Activated T-helper 1 cell treated with anti-CD3 and anti-CD28 coated beads, Interleukin-12 subunit alpha, Interleukin-12 subunit beta, Interleukin-2, Interleukin-4 antibody, amounts not matched to agents 30 ng/mL and 10 ng/mL and 1 ng/mL, durations not matched to agents 14 hours and 24 hours and 36 hours (primary cell): ENCODE measurements at regions of chr7 and their contacts with region 1.

Region 1: DNA sequence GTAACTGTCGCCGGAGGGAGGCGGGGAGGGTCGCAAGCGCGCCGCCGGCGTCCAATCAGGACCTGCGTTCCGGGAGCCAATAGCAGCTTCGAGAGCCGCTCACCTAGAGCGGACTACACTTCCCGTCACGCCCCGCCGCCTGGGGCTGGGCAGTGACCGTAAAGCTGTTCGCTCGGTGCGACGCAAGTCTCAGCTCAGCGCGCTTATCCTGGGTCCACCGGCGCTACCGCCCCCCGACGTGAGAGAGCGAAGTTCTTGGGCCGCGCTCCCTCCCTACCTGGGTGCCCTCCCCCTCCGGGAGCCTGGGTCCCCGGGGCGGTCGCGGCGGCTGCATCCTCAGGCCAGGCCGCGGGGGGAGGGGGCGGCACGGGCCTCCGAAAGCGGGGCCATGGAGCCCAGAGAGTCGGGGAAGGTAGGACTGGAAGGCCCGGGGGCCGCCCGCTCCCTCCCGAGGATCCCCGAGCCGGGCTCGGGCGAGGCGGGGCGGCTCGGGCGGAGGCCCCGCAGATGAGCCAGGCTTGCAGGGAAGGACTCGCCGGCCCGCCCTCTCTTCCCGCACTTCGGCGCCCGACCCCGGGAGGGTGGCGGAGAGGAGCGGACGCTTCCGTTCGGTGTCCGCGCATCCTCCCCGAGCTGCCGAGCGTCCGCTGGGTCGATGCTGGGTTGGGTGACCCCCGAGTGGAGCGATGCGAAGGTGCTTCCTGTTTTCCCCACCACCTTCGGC is at the start of gene ZNF862:
- DNase-seq: peak; percentile 95
- H3K4me3 Mint-ChIP-seq: peak within 1 kb of the TSS; percentile 89
- H3K27ac Mint-ChIP-seq: peak within 1 kb of the TSS; percentile 75
- H3K4me1 Mint-ChIP-seq: peaks cover 25% of the 10 kb centered on the region
- H3K27me3 Mint-ChIP-seq: peaks cover 9% of the 10 kb centered on the region
- total RNA-seq, gene ZNF862: 14.2 and 19.3 TPM in 2 replicates

Region 2: DNA sequence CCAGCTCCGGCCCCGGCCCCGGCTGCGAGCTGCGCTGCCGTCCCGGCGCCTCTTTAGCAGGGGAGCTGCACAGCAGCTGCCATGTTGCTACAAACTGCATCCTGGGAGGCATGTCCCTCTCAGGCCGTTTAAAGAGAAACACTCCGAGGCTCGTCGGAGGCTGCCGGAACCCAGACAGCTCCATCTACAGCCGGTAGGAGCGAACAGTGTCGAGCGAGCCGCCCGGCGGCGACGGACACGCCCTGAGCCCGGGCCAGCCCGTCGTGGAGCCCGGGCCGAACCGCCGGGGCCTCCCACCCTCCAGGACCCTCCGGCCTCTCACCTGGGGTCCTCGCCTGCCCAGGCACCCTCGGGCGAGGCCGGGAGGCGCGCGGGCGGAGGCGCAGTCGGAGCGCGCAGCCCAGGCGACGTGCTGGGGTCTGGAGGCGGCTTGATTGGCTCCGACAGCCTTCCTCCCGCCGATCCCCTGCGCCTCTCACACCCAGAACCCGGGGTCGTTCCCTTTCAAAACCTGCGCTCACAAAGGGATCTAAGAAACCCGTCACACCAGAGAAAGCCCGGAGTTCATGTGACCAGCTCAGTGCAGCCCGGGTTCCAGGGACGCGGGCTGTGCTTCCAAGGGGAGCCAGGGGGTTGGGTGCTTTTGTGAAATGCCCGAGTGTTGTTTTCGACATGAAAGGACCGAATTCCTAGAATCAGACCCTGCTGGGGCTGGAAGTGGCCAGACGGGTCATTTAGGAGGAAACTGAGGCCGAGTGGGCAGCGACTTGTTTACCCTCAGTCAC is 377.7 kb before region 1 on chr7 and contains the start of gene ZNF777:
- intact Hi-C with region 1: loop called (anchors 2 kb)
- DNase-seq: peak; percentile 80
- H3K4me3 Mint-ChIP-seq: peak within 1 kb of the TSS; percentile 85
- H3K27ac Mint-ChIP-seq: peak within 1 kb of the TSS; percentile 66
- H3K4me1 Mint-ChIP-seq: peaks cover 23% of the 10 kb centered on the region
- H3K27me3 Mint-ChIP-seq: peaks cover 27% of the 10 kb centered on the region
- total RNA-seq, gene ZNF777: 19.0 and 19.3 TPM in 2 replicates

Region 3: DNA sequence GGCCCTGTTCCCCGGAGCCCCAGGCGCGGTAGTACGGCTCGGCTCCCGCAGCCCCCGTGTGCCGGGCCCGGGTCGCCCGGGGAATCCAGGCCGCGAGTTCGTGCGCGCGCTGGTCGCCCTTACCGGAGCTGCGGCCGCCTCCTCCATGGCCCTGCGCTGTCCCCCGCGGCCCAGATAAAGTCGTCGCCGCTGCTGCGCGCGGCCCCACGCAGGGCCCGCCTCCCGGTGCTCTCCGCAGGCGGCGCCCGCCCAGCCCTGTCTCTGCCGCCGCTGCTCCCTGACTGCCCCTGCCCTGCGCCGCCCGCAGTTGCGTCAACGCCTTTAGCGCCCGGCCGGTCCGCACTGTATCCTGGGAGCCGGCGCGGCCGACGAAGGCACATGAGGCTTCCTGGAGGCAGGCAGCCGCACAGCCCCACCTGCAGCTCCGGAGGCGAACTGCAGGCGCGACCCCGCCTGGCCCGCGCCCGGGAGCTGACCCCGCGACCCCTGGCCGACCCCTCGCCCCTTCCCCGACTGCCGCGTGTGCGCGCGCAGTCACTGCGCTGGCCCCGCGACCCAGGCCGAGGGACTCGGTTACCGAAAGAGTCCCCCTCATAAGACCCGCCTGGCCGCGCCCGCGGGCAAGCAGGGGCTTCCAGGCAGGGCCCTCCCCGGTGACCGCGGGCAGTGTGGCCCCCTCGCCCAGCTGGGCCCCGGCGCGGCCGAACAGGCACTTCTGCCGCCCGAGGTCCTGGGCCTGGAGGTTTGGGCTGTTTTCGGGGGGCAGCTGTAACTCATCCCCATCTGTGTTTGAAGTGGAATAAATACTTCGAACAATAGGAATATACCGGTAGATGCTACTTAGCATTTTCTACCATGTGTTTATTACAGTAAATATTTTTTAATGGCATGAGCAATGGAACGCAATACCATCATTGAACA is 213.7 kb before region 1 on chr7:
- intact Hi-C with region 1: loop called (anchors 1 kb)
- DNase-seq: peak; percentile 91
- H3K4me3 Mint-ChIP-seq: peak overlapping the region; percentile 89
- H3K27ac Mint-ChIP-seq: peak overlapping the region; percentile 83
- H3K4me1 Mint-ChIP-seq: peaks cover 32% of the 10 kb centered on the region
- H3K27me3 Mint-ChIP-seq: peaks cover 6% of the 10 kb centered on the region

Region 4: GRCh38 chr7:149771721-149772240 is 66.6 kb before region 1 on chr7:
- intact Hi-C with region 1: loop called (anchors 1 kb)
- DNase-seq: peak; percentile 83
- H3K4me3 Mint-ChIP-seq: peak overlapping the region; percentile 82
- H3K27ac Mint-ChIP-seq: no peak overlapping the region
- H3K4me1 Mint-ChIP-seq: no peaks in the 10 kb centered on the region
- H3K27me3 Mint-ChIP-seq: peaks cover 28% of the 10 kb centered on the region

Region 5: DNA sequence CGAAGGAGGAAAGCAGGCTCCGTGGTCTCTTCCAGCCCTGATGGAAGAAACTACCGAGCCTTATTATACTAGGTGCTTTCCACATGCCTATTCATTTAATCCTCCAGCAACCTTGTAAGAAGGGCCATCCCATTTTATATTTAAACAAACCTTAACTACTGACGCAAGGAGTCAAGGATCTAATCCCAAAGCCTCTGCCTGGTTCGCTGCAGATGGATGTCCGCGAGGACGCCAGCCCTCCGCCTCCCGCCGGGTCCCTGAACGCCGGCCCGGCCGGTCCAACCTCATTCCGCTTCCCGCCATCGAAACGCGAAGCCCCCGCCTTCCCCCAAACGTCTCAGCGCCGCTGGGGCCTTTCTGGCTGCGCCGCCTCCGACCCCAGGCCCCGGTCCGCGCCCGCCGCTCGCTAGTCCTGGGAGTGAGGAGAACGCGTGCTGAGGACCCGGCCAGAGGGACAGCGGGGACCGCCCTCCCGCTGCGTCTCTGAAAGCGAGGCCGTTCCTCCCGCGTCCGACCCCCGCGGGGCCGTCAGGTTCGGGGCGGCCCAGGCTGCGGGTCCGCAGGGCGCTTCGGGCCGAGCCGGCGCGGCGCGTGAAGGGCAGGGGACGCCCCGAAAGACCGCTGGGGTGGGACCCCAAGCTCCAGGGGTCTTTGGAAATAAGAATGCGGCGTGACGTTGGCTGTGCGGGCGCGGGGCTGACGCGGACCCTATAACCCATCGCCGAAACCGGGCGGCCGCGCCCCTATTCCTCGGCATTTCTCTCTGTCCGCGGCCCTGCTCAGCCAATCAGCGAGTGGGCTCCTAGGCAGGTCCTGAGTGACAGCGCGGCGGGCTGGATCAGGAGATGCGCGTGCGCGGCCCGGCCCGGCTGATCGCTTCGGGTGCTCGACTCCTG is 34.9 kb after region 1 on chr7 and contains the start of gene ATP6V0E2:
- intact Hi-C with region 1: loop called (anchors 1 kb)
- DNase-seq: peak; percentile 92
- H3K4me3 Mint-ChIP-seq: peak within 1 kb of the TSS; percentile 90
- H3K27ac Mint-ChIP-seq: peak within 1 kb of the TSS; percentile 92
- H3K4me1 Mint-ChIP-seq: peaks cover 75% of the 10 kb centered on the region
- H3K27me3 Mint-ChIP-seq: no peaks in the 10 kb centered on the region
- total RNA-seq, gene ATP6V0E2: 47.5 and 51.2 TPM in 2 replicates